Ascending aorta (tissue), 2 donors: ENCODE measurements at regions of chr20 and their contacts with region 1.

Region 1: GRCh38 chr20:12970372-12970821 is 38.4 kb upstream of the SPTLC3 start:
- DNase-seq: no peak
- H3K4me3 ChIP-seq: no peak overlapping the region
- H3K27ac ChIP-seq: no peak overlapping the region
- H3K4me1 ChIP-seq: no peaks in the 10 kb centered on the region
- H3K27me3 ChIP-seq: no peaks in the 10 kb centered on the region
- CTCF ChIP-seq: peak; percentile 45 to 62 (median 49)

Region 2: GRCh38 chr20:12847872-12848271 is 122.5 kb before region 1 on chr20:
- intact Hi-C with region 1: no loop called
- DNase-seq: no peak
- H3K4me3 ChIP-seq: no peak overlapping the region
- H3K27ac ChIP-seq: no peak overlapping the region
- H3K4me1 ChIP-seq: no peaks in the 10 kb centered on the region
- H3K27me3 ChIP-seq: no peaks in the 10 kb centered on the region
- CTCF ChIP-seq: no peak

Region 3: GRCh38 chr20:12925214-12925755 is 45.1 kb before region 1 on chr20:
- intact Hi-C with region 1: loop called (anchors 1 kb)
- DNase-seq: no peak
- H3K4me3 ChIP-seq: peak overlapping the region in 1 of 2 donors; percentile 11
- H3K27ac ChIP-seq: no peak overlapping the region
- H3K4me1 ChIP-seq: peaks cover 3 to 5% of the 10 kb centered on the region in 2 donors
- H3K27me3 ChIP-seq: no peaks in the 10 kb centered on the region
- CTCF ChIP-seq: peak; percentile 72 to 84 (median 81)

Region 4: GRCh38 chr20:13166011-13166410 is 195.6 kb after region 1 on chr20:
- intact Hi-C with region 1: no loop called
- DNase-seq: no peak
- H3K4me3 ChIP-seq: no peak overlapping the region
- H3K27ac ChIP-seq: no peak overlapping the region
- H3K4me1 ChIP-seq: no peaks in the 10 kb centered on the region
- H3K27me3 ChIP-seq: no peaks in the 10 kb centered on the region
- CTCF ChIP-seq: no peak